ENCODE measurements at regions of chr1 and their contacts with region 1.

Region 1: GRCh38 chr1:30707412-30708360 is 15.7 kb downstream of the MATN1 start:
- DNase-seq: peak; percentile 76 to 79 (median 76)
- ATAC-seq: peak; percentile 93 to 97 (median 94)
- H3K4me3 ChIP-seq: no peak overlapping the region
- H3K27ac ChIP-seq: no peak overlapping the region
- H3K4me1 ChIP-seq: no peaks in the 10 kb centered on the region
- H3K27me3 ChIP-seq: no peaks in the 10 kb centered on the region
- CTCF ChIP-seq: peak; percentile 83 to 97 (median 88)
- POLR2A ChIP-seq: no peak

Region 2: GRCh38 chr1:29230553-29231378 is 1476.9 kb before region 1 on chr1 and contains the start of gene MECR:
- intact Hi-C with region 1: loop called (anchors 10 kb)
- DNase-seq: peak; percentile 93 to 94 (median 93)
- ATAC-seq: peak; percentile 97 to 99 (median 98)
- H3K4me3 ChIP-seq: peak within 1 kb of the TSS; percentile 74 to 85 (median 79)
- H3K27ac ChIP-seq: peak within 1 kb of the TSS; percentile 26 to 45 (median 27)
- H3K4me1 ChIP-seq: peaks cover 0 to 8% (median 0%) of the 10 kb centered on the region in 4 donors
- H3K27me3 ChIP-seq: no peaks in the 10 kb centered on the region
- CTCF ChIP-seq: peak in 3 of 4 donors; percentile 19 to 25 (median 21)
- POLR2A ChIP-seq: peak; percentile 58
- total RNA-seq, gene MECR: 13.1 to 22.1 (median 15.7) TPM

Region 3: DNA sequence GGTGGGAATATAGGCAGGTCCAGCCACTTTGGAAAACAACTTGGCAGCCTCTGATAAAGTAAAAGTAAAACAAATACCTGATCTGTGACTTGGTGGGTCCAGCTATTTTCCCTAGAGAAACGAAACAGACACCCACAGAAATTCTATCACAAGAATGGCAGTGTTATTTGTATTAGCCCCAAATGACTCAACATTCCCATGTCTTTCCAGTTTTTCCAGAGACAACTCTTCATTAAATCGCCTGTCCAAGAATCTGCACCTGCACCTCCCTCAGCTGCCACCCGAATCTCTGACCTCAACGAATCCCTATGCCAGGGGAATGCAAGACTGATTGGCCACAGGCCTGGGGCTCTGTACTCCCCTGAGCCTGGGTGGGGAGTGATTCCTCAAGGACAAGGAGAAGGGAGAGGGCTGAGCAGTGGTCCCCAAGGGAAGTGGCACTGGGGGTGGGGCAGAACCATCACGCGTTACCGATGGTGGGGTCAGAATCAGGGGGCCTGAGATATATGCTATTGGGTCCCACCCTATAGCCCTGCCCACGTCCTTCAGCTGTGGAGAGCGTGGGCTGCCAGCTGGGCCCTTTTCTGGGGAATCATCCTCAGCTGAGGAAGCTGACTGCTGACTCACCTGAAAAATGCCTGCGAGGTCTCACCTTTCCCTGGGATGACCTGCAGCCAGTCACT is 918.3 kb before region 1 on chr1:
- intact Hi-C with region 1: loop called in 1 of 2 experiments (anchors 10 kb)
- DNase-seq: no peak
- ATAC-seq: no peak
- H3K4me3 ChIP-seq: no peak overlapping the region
- H3K27ac ChIP-seq: no peak overlapping the region
- H3K4me1 ChIP-seq: no peaks in the 10 kb centered on the region
- H3K27me3 ChIP-seq: no peaks in the 10 kb centered on the region
- CTCF ChIP-seq: no peak
- POLR2A ChIP-seq: no peak

Measured in right lobe of liver (tissue), 6 donors.